ENCODE measurements at regions of chr11 and their contacts with region 1.

Region 1: GRCh38 chr11:86869966-86870570 is 69.7 kb downstream of the PRSS23 start:
- DNase-seq: peak; percentile 27
- H3K4me3 ChIP-seq: no peak overlapping the region
- H3K27ac ChIP-seq: no peak overlapping the region
- H3K27me3 ChIP-seq: no peaks in the 10 kb centered on the region
- CTCF ChIP-seq: peak; percentile 87

Region 2: GRCh38 chr11:86456052-86456939 is 413.8 kb before region 1 on chr11:
- CTCF ChIA-PET with region 1: interaction called, 15 read pairs
- POLR2A ChIA-PET with region 1: no interaction called
- DNase-seq: peak; percentile 66
- H3K4me3 ChIP-seq: no peak overlapping the region
- H3K27ac ChIP-seq: no peak overlapping the region
- H3K27me3 ChIP-seq: no peaks in the 10 kb centered on the region
- CTCF ChIP-seq: peak; percentile 93

Region 3: GRCh38 chr11:86902345-86902744 is 32.3 kb after region 1 on chr11:
- CTCF ChIA-PET with region 1: interaction called, 12 read pairs
- POLR2A ChIA-PET with region 1: no interaction called
- DNase-seq: no peak
- H3K4me3 ChIP-seq: no peak overlapping the region
- H3K27ac ChIP-seq: no peak overlapping the region
- H3K27me3 ChIP-seq: no peaks in the 10 kb centered on the region
- CTCF ChIP-seq: no peak

Region 4: GRCh38 chr11:86919557-86920210 is 49.6 kb after region 1 on chr11:
- CTCF ChIA-PET with region 1: interaction called, 252 read pairs
- POLR2A ChIA-PET with region 1: no interaction called
- DNase-seq: peak; percentile 59
- H3K4me3 ChIP-seq: no peak overlapping the region
- H3K27ac ChIP-seq: no peak overlapping the region
- H3K27me3 ChIP-seq: no peaks in the 10 kb centered on the region
- CTCF ChIP-seq: peak; percentile 81

Region 5: GRCh38 chr11:86938900-86939880 is 69.1 kb after region 1 on chr11:
- CTCF ChIA-PET with region 1: interaction called, 26 read pairs
- POLR2A ChIA-PET with region 1: no interaction called
- DNase-seq: no peak
- H3K4me3 ChIP-seq: no peak overlapping the region
- H3K27ac ChIP-seq: no peak overlapping the region
- H3K27me3 ChIP-seq: no peaks in the 10 kb centered on the region
- CTCF ChIP-seq: peak; percentile 67

Region 6: GRCh38 chr11:87421422-87421821 is 551.4 kb after region 1 on chr11:
- CTCF ChIA-PET with region 1: interaction called, 10 read pairs
- POLR2A ChIA-PET with region 1: no interaction called
- DNase-seq: peak; percentile 66
- H3K4me3 ChIP-seq: no peak overlapping the region
- H3K27ac ChIP-seq: no peak overlapping the region
- H3K27me3 ChIP-seq: no peaks in the 10 kb centered on the region
- CTCF ChIP-seq: peak; percentile 76